ENCODE measurements at regions of chr21 and their contacts with region 1.

Region 1: GRCh38 chr21:44454747-44455523 is at the start of gene LRRC3:
- DNase-seq: peak; percentile 85 to 95 (median 93)
- ATAC-seq: peak; percentile 58 to 92 (median 88)
- H3K4me3 ChIP-seq: peak within 1 kb of the TSS; percentile 63 to 96 (median 80)
- H3K27ac ChIP-seq: peak within 1 kb of the TSS in 7 of 12 donors; percentile 17 to 85 (median 47)
- H3K4me1 ChIP-seq: peaks cover 0 to 17% (median 5%) of the 10 kb centered on the region in 12 donors
- H3K27me3 ChIP-seq: peaks cover 0 to 8% (median 0%) of the 10 kb centered on the region in 9 donors
- CTCF ChIP-seq: no peak
- POLR2A ChIP-seq: no peak
- total RNA-seq, gene LRRC3: 1.7 to 5.3 (median 2.3) TPM

Region 2: GRCh38 chr21:44338971-44339910 is 115.7 kb before region 1 on chr21 and contains the start of gene CFAP410:
- intact Hi-C with region 1: loop called in 3 of 10 experiments (anchors 10 kb)
- DNase-seq: peak; percentile 93 to 97 (median 95)
- ATAC-seq: peak; percentile 90 to 95 (median 94)
- H3K4me3 ChIP-seq: peak within 1 kb of the TSS; percentile 43 to 94 (median 86)
- H3K27ac ChIP-seq: peak within 1 kb of the TSS; percentile 90 to 100 (median 98)
- H3K4me1 ChIP-seq: peaks cover 3 to 19% (median 14%) of the 10 kb centered on the region in 12 donors
- H3K27me3 ChIP-seq: no peaks in the 10 kb centered on the region
- CTCF ChIP-seq: no peak
- POLR2A ChIP-seq: peak; percentile 12 to 96
- total RNA-seq, gene CFAP410: 10.4 to 31.6 (median 15.3) TPM

Region 3: DNA sequence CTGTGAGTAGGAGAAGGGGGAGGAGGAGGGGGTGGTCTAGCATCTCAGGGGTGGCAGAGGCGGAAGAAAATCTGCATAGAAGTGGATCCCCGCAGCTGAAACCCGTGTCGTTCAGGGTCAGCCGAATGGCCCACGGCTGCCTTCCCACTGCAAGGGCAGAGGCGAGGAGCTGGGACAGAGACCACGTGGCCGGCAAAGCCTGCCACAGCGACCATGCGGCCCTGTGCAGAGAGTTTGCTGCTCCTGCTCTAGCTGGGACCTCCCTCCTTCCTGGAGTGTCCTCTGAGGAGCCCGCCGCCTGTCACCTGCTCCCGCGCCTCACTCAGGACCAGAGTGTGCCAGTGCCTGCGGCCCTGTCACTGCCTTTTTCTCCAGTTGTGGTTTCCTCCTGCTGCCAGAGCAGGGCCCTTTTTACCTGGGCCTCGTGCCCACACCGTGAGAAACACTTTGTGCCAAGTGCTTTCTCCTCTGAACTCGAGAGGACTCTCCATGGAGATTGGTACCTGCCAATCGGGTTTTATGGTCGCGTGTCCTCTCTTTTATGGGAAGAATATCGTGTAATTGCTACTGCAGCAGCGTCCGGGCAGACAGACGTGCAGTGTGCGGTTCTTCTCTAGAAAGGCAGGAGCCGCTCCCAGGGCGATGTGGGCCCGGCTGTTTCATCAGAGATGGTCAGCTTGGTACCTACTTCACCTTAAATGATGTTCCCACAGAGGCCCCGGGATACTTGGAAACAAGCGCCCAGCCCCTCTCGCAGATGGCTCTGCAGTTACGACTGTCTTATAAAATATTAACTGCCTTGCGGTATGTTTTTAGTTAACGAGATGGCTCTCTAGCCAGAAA is 106.8 kb before region 1 on chr21:
- intact Hi-C with region 1: loop called in 2 of 10 experiments (anchors 10 kb)
- DNase-seq: peak in 1 of 5 donors; percentile 24
- ATAC-seq: no peak
- H3K4me3 ChIP-seq: no peak overlapping the region
- H3K27ac ChIP-seq: no peak overlapping the region
- H3K4me1 ChIP-seq: peaks cover 0 to 26% (median 0%) of the 10 kb centered on the region in 12 donors
- H3K27me3 ChIP-seq: peaks cover 9 to 40% (median 30%) of the 10 kb centered on the region in 9 donors
- CTCF ChIP-seq: no peak
- POLR2A ChIP-seq: no peak

Region 4: DNA sequence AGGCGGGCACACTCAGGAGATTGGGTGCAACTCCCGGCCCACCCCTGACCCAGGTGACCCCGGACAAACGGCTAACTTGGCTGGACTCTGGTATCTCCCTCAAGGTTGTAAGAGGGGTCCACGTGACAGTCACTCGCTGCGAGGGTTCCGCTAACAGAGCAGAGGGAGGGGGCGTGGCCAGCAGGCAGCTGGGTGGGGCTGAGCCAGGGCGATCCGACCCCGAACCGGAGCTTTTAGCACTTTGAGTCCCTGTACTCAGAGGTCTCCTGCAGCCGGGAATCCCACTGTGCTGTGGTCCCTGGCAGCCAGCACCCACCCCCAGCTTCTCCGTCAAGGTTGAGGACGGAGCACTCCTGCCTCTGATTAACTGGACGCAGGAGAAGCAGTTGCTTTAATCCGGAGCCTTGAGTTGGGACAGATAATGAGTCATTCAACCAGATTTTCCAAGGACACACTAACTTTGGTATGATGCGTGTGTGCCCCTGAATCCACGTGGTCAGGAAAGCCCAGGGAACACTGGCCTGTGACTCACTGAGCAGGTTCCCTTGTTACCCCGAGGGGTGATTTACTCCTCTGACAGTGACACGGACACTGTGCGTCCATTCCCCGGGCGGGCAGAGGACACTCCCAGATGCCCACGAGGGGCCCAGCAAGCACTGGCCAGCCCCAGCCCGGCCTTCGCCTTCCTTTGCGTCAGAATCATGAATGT is 84.8 kb before region 1 on chr21:
- intact Hi-C with region 1: loop called in 1 of 10 experiments (anchors 10 kb)
- DNase-seq: peak in 1 of 5 donors; percentile 4
- ATAC-seq: peak in 2 of 4 donors; percentile 30 to 31
- H3K4me3 ChIP-seq: peak overlapping the region in 2 of 12 donors; percentile 7 to 16
- H3K27ac ChIP-seq: no peak overlapping the region
- H3K4me1 ChIP-seq: peaks cover 0 to 10% (median 0%) of the 10 kb centered on the region in 12 donors
- H3K27me3 ChIP-seq: peaks cover 0 to 35% (median 15%) of the 10 kb centered on the region in 9 donors
- CTCF ChIP-seq: no peak
- POLR2A ChIP-seq: no peak

Region 5: DNA sequence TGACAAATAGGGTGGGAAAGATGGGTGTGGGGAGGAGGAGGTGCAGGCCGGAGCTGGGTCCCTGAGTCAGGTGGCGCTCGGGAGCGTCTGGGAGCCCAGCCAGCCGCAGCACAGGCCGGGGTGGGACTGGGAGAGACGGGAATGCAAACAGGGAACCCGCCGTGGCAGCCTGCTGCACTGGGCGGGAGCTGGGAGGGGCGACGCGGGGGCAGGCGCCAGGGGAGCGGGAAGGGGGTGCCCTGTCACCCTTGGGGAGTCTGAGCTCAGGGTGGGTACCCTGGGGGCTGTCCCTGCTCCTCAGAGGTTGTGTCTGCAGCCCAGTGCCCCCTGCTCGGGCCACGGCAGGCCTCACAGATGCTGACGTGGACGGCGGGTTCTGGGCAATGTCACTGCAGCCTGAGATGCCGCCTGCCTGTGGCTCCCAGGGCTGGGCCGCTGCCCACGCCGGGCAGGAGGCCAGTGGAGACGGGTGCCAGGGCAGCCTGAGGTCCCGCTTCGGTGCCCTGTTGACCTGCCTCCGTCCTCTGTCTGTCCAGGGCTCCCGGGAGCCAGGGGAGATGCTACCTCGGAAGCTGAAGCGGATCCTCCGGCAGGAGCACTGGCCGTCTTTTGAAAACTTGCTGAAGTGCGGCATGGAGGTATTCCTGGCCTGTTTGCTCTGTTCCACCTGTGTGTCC is 16.3 kb before region 1 on chr21:
- intact Hi-C with region 1: loop called in 1 of 10 experiments (anchors 2 kb)
- DNase-seq: peak; percentile 77 to 89 (median 84)
- ATAC-seq: peak; percentile 91 to 95 (median 92)
- H3K4me3 ChIP-seq: peak overlapping the region in 6 of 12 donors; percentile 14 to 40 (median 30)
- H3K27ac ChIP-seq: peak overlapping the region; percentile 0 to 92 (median 82)
- H3K4me1 ChIP-seq: peaks cover 0 to 17% (median 2%) of the 10 kb centered on the region in 12 donors
- H3K27me3 ChIP-seq: no peaks in the 10 kb centered on the region
- CTCF ChIP-seq: no peak
- POLR2A ChIP-seq: no peak

Measured in heart left ventricle (tissue), 16 donors.